ENCODE measurements at regions of chr4 and their contacts with region 1.

Region 1: DNA sequence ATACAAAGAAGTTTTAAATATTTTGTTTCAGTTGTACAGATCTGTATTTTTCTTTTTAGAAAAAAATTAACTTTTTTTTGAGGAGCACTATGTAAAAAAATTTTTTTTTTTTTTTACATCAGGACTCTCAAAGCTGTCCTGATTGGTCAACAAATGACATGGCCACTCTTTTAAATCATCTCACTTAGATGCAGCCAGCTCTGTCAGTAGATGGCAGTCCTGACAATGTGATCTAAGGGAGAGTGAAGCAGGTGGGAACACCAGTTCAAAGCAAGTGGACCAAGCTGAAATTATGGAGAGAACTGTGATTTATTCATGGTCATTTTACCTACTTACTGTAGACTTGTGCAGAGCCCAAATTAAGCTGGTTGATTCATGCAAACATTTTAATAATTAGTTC is 174.6 kb upstream of the GPRIN3 start:
- DNase-seq: no peak
- ATAC-seq: no peak
- H3K4me3 ChIP-seq: no peak overlapping the region
- H3K4me3 Mint-ChIP-seq: no peak overlapping the region
- H3K27ac ChIP-seq: no peak overlapping the region
- H3K27ac Mint-ChIP-seq: no peak overlapping the region
- H3K4me1 ChIP-seq: no peaks in the 10 kb centered on the region
- H3K4me1 Mint-ChIP-seq: no peaks in the 10 kb centered on the region
- H3K27me3 ChIP-seq: no peaks in the 10 kb centered on the region
- H3K27me3 Mint-ChIP-seq: peaks cover 0 to 17% (median 0%) of the 10 kb centered on the region in 5 donors

Region 2: DNA sequence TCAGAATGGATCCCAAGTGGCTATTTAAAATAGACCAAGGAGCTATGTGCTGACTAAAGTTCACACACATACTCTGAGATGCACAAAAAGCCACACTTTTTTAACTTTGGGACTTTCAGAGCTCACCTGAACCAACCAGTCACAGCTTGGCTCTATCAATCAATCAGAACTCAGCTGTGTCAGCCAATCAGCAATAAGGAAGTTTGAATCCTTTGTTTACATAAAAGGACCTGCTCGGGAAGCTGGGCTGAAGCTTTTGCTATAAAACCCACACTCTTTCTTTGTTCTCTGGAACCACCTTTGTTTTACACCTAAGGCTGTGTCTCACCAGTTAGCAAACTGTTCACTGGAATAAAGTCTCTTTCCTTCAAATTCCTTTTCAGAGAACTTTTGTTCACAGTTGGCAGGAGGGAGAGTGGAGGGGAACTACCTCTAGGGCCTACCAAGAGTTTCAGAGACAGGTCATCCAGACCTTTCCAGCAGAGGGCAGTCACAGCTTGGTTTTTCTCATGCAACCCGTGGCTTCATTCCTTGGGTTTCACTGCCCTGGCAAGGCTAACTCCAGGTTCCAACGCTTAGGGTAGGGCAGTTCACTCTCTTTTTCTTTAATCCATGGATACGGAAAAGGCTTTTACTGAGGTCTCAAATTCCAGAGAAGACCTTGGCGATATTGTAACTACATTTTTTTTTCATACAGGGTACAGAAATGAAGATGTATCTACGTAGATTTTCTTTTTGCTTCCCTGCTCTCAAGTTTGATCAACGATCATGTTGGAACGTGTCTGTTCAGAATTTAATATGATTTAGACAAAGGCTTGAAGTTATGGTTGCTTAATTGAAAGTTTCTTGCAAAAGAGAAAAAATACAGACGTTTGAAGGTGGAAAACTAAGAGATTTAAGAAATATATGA is 255.3 kb before region 1 on chr4:
- CTCF ChIA-PET with region 1: no interaction called
- POLR2A ChIA-PET with region 1: no interaction called
- intact Hi-C with region 1: no loop called
- DNase-seq: peak; percentile 37 to 79 (median 68)
- ATAC-seq: peak; percentile 93
- H3K4me3 ChIP-seq: peak overlapping the region; percentile 21
- H3K4me3 Mint-ChIP-seq: peak overlapping the region in 9 of 10 donors; percentile 54 to 78 (median 63)
- H3K27ac ChIP-seq: no peak overlapping the region
- H3K27ac Mint-ChIP-seq: peak overlapping the region in 2 of 9 donors; percentile 19 to 34
- H3K4me1 ChIP-seq: no peaks in the 10 kb centered on the region
- H3K4me1 Mint-ChIP-seq: peaks cover 0 to 10% (median 5%) of the 10 kb centered on the region in 7 donors
- H3K27me3 ChIP-seq: no peaks in the 10 kb centered on the region
- H3K27me3 Mint-ChIP-seq: peaks cover 0 to 7% (median 0%) of the 10 kb centered on the region in 5 donors

Region 3: DNA sequence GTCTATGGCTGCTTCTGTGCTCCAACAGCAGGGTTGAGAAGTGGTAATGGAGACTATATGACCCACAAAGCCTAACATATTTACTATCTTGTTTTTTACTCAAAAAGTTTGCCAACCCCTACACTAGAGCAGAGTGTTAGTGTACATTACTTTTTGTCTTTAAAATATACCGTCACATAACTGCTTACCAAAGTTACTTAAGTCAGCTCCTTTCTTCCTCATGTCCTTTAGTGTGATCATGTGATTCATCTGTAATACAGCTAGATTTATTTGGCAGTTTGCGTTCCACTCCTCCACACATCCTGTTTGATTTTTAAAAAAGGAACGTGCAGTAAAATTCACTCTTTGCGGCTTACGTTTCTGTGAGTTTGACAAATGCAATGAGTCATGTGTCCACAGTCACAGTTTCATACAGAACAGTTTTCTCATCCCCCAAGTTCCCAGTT is 12.3 kb before region 1 on chr4:
- CTCF ChIA-PET with region 1: interaction called, 4 read pairs
- POLR2A ChIA-PET with region 1: no interaction called
- intact Hi-C with region 1: loop called in 1 of 2 experiments (anchors 2 kb)
- DNase-seq: peak in 7 of 9 donors; percentile 18 to 61 (median 47)
- ATAC-seq: peak; percentile 76
- H3K4me3 ChIP-seq: no peak overlapping the region
- H3K4me3 Mint-ChIP-seq: peak overlapping the region in 9 of 10 donors; percentile 13 to 74 (median 62)
- H3K27ac ChIP-seq: no peak overlapping the region
- H3K27ac Mint-ChIP-seq: peak overlapping the region; percentile 7 to 82 (median 58)
- H3K4me1 ChIP-seq: peaks cover 0 to 7% of the 10 kb centered on the region in 2 donors
- H3K4me1 Mint-ChIP-seq: peaks cover 11 to 28% (median 23%) of the 10 kb centered on the region in 7 donors
- H3K27me3 ChIP-seq: no peaks in the 10 kb centered on the region
- H3K27me3 Mint-ChIP-seq: no peaks in the 10 kb centered on the region

Region 4: GRCh38 chr4:89598602-89599001 is 116.4 kb after region 1 on chr4:
- CTCF ChIA-PET with region 1: no interaction called
- POLR2A ChIA-PET with region 1: no interaction called
- intact Hi-C with region 1: no loop called
- DNase-seq: peak in 1 of 9 donors; percentile 6
- ATAC-seq: no peak
- H3K4me3 ChIP-seq: no peak overlapping the region
- H3K4me3 Mint-ChIP-seq: no peak overlapping the region
- H3K27ac ChIP-seq: no peak overlapping the region
- H3K27ac Mint-ChIP-seq: no peak overlapping the region
- H3K4me1 ChIP-seq: no peaks in the 10 kb centered on the region
- H3K4me1 Mint-ChIP-seq: no peaks in the 10 kb centered on the region
- H3K27me3 ChIP-seq: no peaks in the 10 kb centered on the region
- H3K27me3 Mint-ChIP-seq: peaks cover 4 to 20% (median 9%) of the 10 kb centered on the region in 5 donors

Region 5: DNA sequence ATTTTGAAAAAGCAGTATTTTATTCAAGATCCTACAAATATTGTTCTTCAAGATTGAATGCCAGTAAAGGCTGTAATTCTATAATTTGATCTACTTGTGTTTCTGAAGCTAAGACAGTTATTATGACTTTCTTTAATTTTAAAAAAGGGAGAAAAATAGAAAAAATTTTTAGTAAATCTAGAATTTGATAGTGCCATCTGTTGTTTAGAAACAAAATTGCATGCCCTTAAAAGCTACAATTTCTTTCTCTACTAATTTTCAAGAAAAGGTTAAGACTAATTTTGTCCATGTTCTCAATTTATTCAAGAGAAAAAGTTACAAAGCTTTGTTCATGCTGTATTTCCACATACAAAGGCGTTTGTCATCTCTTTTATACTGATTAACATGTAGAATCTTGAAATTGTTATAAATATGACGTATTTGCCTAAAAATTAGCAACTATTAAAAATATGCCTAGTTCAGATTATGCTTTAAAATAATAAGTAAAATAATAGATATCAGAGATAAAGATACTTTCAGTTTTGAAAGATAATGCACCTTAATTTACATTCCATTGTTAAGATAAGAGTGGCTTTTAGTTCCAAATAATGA is 386.8 kb after region 1 on chr4:
- CTCF ChIA-PET with region 1: interaction called, 5 read pairs
- POLR2A ChIA-PET with region 1: no interaction called
- intact Hi-C with region 1: loop called in 1 of 2 experiments (anchors 10 kb)
- DNase-seq: no peak
- ATAC-seq: no peak
- H3K4me3 ChIP-seq: no peak overlapping the region
- H3K4me3 Mint-ChIP-seq: no peak overlapping the region
- H3K27ac ChIP-seq: no peak overlapping the region
- H3K27ac Mint-ChIP-seq: no peak overlapping the region
- H3K4me1 ChIP-seq: no peaks in the 10 kb centered on the region
- H3K4me1 Mint-ChIP-seq: no peaks in the 10 kb centered on the region
- H3K27me3 ChIP-seq: no peaks in the 10 kb centered on the region
- H3K27me3 Mint-ChIP-seq: peaks cover 4 to 16% (median 6%) of the 10 kb centered on the region in 5 donors

Region 6: DNA sequence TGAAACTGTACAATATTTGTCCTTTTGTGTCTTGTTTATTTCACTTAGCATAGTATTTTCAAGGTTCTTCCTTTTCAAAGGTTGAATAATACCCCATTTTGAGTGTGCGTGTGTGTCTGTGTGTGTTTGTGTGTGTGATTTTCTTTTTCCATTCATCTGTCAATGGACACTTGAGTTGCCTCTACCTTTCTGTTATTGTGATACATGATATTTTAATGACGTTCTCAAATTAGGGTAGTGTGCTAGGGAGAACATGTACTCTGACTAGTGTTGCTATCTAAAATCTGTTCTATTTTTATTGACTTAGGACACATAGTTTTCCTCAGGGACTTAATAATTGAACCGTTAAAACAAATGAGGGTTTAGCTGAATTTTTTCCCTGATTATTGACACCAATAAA is 422.3 kb after region 1 on chr4:
- CTCF ChIA-PET with region 1: interaction called, 3 read pairs
- POLR2A ChIA-PET with region 1: no interaction called
- intact Hi-C with region 1: loop called (anchors 1 to 5 kb)
- DNase-seq: no peak
- ATAC-seq: no peak
- H3K4me3 ChIP-seq: no peak overlapping the region
- H3K4me3 Mint-ChIP-seq: no peak overlapping the region
- H3K27ac ChIP-seq: no peak overlapping the region
- H3K27ac Mint-ChIP-seq: no peak overlapping the region
- H3K4me1 ChIP-seq: no peaks in the 10 kb centered on the region
- H3K4me1 Mint-ChIP-seq: no peaks in the 10 kb centered on the region
- H3K27me3 ChIP-seq: no peaks in the 10 kb centered on the region
- H3K27me3 Mint-ChIP-seq: peaks cover 0 to 17% (median 0%) of the 10 kb centered on the region in 5 donors

Measured in naive thymus-derived CD4-positive, alpha-beta T cell (primary cell).